Caco-2 (cell line): ENCODE measurements at regions of chr17 and their contacts with region 1.

Region 1: GRCh38 chr17:29369831-29370735 is 20.1 kb upstream of the TAOK1 start:
- DNase-seq: peak; percentile 73 to 79
- H3K4me3 ChIP-seq: peak overlapping the region; percentile 17; the same call in 1 of the 2 replicates
- H3K4me3 Mint-ChIP-seq: no peak overlapping the region
- H3K27ac Mint-ChIP-seq: no peak overlapping the region
- H3K4me1 ChIP-seq: no peaks in the 10 kb centered on the region; the same call in 1 of the 2 replicates
- H3K4me1 Mint-ChIP-seq: peaks cover 14% of the 10 kb centered on the region
- H3K27me3 ChIP-seq: no peaks in the 10 kb centered on the region
- H3K27me3 Mint-ChIP-seq: no peaks in the 10 kb centered on the region
- CTCF ChIP-seq: peak; percentile 77 to 81

Region 2: DNA sequence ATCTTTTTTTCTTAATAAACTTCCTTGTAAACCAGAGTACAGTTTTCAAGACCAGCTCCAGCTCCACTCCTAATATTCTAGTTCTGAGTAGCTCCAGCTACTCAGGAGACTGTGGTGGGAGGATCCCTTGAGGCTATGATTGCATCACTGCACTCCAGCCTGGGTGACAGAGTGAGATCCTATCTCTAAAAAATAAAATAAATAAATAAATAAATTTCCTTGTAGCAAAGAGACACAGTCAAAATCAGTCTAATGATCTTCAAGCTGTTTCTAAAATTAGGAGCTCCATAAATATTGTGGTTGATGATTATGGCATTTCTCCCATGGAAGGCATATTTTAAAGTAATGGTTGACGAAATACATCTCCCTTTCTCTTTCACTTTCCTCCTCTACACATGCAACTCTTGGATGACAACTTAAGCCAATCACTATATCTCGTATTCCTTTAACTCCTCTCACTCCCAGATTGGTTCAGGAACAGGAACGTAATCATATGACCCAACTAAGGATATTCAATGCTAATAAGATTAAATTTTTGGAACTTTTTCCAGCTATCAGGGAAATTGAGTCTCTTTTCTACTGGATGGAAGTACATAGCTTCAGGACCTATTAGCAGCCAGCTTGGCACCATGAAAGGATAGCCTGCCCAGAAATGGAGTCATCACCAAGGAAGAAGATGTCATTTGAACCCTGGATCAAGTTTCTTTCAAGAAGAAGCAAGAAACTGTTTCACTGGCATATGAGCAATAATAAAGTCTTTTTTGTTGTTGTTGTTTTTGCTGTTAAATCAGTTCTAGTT is 22.1 kb before region 1 on chr17:
- CTCF ChIA-PET with region 1: interaction called, 12 read pairs
- POLR2A ChIA-PET with region 1: interaction called, 4 read pairs
- intact Hi-C with region 1: loop called (anchors 1 kb)
- DNase-seq: no peak
- H3K4me3 ChIP-seq: no peak overlapping the region
- H3K4me3 Mint-ChIP-seq: no peak overlapping the region
- H3K27ac Mint-ChIP-seq: peak overlapping the region; percentile 34
- H3K4me1 ChIP-seq: peaks cover 22% of the 10 kb centered on the region
- H3K4me1 Mint-ChIP-seq: peaks cover 24% of the 10 kb centered on the region
- H3K27me3 ChIP-seq: no peaks in the 10 kb centered on the region
- H3K27me3 Mint-ChIP-seq: no peaks in the 10 kb centered on the region
- CTCF ChIP-seq: no peak

Region 3: GRCh38 chr17:29495011-29495410 is 124.9 kb after region 1 on chr17:
- CTCF ChIA-PET with region 1: interaction called, 13 read pairs
- POLR2A ChIA-PET with region 1: no interaction called
- intact Hi-C with region 1: no loop called
- DNase-seq: no peak
- H3K4me3 ChIP-seq: no peak overlapping the region
- H3K4me3 Mint-ChIP-seq: no peak overlapping the region
- H3K27ac Mint-ChIP-seq: no peak overlapping the region
- H3K4me1 ChIP-seq: no peaks in the 10 kb centered on the region
- H3K4me1 Mint-ChIP-seq: no peaks in the 10 kb centered on the region
- H3K27me3 ChIP-seq: no peaks in the 10 kb centered on the region
- H3K27me3 Mint-ChIP-seq: no peaks in the 10 kb centered on the region
- CTCF ChIP-seq: no peak

Region 4: GRCh38 chr17:29568331-29569244 is 198.5 kb after region 1 on chr17 and contains the start of gene TP53I13:
- CTCF ChIA-PET with region 1: interaction called, 19 read pairs
- POLR2A ChIA-PET with region 1: no interaction called
- intact Hi-C with region 1: no loop called
- DNase-seq: peak; percentile 92 to 93
- H3K4me3 ChIP-seq: peak within 1 kb of the TSS; percentile 87
- H3K4me3 Mint-ChIP-seq: peak within 1 kb of the TSS; percentile 97
- H3K27ac Mint-ChIP-seq: peak within 1 kb of the TSS; percentile 85
- H3K4me1 ChIP-seq: peaks cover 10% of the 10 kb centered on the region; the same call in 1 of the 2 replicates
- H3K4me1 Mint-ChIP-seq: peaks cover 6% of the 10 kb centered on the region
- H3K27me3 ChIP-seq: no peaks in the 10 kb centered on the region
- H3K27me3 Mint-ChIP-seq: no peaks in the 10 kb centered on the region
- CTCF ChIP-seq: no peak
- total RNA-seq, gene TP53I13: 43.9 and 49.2 TPM in 2 replicates

Region 5: GRCh38 chr17:29617125-29617480 is 247.0 kb after region 1 on chr17:
- CTCF ChIA-PET with region 1: interaction called, 15 read pairs
- POLR2A ChIA-PET with region 1: no interaction called
- intact Hi-C with region 1: no loop called
- DNase-seq: peak; percentile 85 to 87
- H3K4me3 ChIP-seq: peak overlapping the region; percentile 42
- H3K4me3 Mint-ChIP-seq: peak overlapping the region; percentile 87
- H3K27ac Mint-ChIP-seq: peak overlapping the region; percentile 19
- H3K4me1 ChIP-seq: peaks cover 23% of the 10 kb centered on the region
- H3K4me1 Mint-ChIP-seq: peaks cover 9% of the 10 kb centered on the region
- H3K27me3 ChIP-seq: peaks cover 8% of the 10 kb centered on the region
- H3K27me3 Mint-ChIP-seq: peaks cover 5% of the 10 kb centered on the region
- CTCF ChIP-seq: peak; percentile 67 to 74